Body of pancreas (tissue), 4 donors: ENCODE measurements at regions of chr3 and their contacts with region 1.

Region 1: GRCh38 chr3:51371943-51372557 is 13.0 kb upstream of the MANF start:
- DNase-seq: peak; percentile 51 to 77 (median 70)
- ATAC-seq: peak; percentile 70
- H3K4me3 ChIP-seq: no peak overlapping the region
- H3K27ac ChIP-seq: no peak overlapping the region
- H3K4me1 ChIP-seq: no peaks in the 10 kb centered on the region
- H3K27me3 ChIP-seq: peaks cover 0 to 8% of the 10 kb centered on the region in 2 donors
- CTCF ChIP-seq: peak; percentile 25 to 80 (median 66)
- POLR2A ChIP-seq: no peak

Region 2: DNA sequence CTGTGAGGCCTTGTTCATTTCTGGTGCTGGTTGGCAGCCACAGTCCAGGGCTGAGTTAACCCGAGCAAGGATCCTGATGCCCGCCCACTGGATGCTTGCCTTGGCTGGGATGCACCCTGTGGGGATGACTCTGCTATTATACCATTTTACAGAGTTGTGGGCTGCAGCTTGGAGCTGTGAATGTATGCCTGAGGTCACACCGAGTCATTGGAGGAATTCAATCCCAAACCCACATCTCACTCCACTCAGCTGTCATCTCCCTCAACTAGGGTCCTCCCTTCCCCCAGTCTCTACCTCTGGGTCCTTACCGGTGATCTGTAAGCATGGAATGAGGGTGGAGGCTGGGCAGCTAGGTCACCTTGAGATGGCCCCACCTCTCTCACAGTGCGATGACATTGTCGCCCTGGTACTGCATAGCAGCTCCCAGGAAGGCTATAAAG is 733.0 kb before region 1 on chr3:
- intact Hi-C with region 1: loop called (anchors 10 kb)
- DNase-seq: no peak
- ATAC-seq: no peak
- H3K4me3 ChIP-seq: no peak overlapping the region
- H3K27ac ChIP-seq: no peak overlapping the region
- H3K4me1 ChIP-seq: no peaks in the 10 kb centered on the region
- H3K27me3 ChIP-seq: no peaks in the 10 kb centered on the region
- CTCF ChIP-seq: no peak
- POLR2A ChIP-seq: no peak